Activated CD4-positive, alpha-beta memory T cell treated with anti-CD3 and anti-CD28 coated beads for 36 hours (primary cell): ENCODE measurements at regions of chr2 and their contacts with region 1.

Region 1: GRCh38 chr2:26764078-26764887 is at the start of gene SLC35F6:
- DNase-seq: peak; percentile 87
- H3K4me3 Mint-ChIP-seq: peak within 1 kb of the TSS; percentile 79
- H3K27ac Mint-ChIP-seq: peak within 1 kb of the TSS; percentile 82
- H3K4me1 Mint-ChIP-seq: peaks cover 34% of the 10 kb centered on the region
- H3K27me3 Mint-ChIP-seq: no peaks in the 10 kb centered on the region
- total RNA-seq, gene SLC35F6: 6.6 to 6.8 TPM

Region 2: DNA sequence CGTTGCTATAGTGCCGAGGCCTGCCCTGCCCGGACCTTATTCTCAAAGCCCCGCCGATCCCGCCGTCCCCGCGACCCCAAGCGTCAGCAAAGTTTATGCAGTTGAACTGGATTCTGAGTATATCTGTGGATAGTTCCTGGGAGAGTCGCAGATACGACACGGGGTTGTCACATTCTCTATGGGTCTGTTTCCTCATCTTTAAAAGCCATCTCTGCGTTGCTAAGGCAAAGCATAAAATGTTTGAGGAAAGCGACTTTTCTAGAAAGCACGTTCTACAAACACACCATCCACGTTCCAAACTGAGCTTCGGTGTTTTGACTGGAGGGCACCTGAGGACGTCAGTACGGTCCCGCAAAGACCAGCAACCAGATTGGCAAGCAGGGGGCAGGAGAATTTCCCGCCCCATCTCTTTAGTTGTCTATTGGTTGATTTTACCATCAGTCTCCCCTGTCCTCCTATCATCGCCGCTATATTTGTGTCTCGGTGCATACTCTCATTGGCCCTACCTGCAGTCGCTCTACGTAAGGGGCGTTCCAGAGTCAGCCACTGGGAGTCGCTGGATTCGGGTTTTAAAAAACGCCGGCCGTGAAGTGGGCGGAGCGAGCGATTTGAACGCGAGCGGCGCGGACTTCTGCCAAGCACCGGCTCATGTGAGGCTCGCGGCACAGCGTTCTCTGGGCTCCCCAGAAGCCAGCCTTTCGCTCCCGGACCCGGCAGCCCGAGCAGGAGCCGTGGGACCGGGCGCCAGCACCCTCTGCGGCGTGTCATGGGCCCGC is 21.3 kb after region 1 on chr2 and contains the start of gene CENPA:
- CTCF ChIA-PET with region 1: no interaction called
- POLR2A ChIA-PET with region 1: interaction called, 3 read pairs
- intact Hi-C with region 1: loop called (anchors 2 kb)
- DNase-seq: peak; percentile 97
- H3K4me3 Mint-ChIP-seq: peak within 1 kb of the TSS; percentile 85
- H3K27ac Mint-ChIP-seq: peak within 1 kb of the TSS; percentile 52
- H3K4me1 Mint-ChIP-seq: peaks cover 17% of the 10 kb centered on the region
- H3K27me3 Mint-ChIP-seq: peaks cover 2% of the 10 kb centered on the region
- total RNA-seq, gene CENPA: 36.7 to 37.8 TPM

Region 3: GRCh38 chr2:26838121-26838906 is 74.0 kb after region 1 on chr2:
- CTCF ChIA-PET with region 1: no interaction called
- POLR2A ChIA-PET with region 1: no interaction called
- intact Hi-C with region 1: no loop called
- DNase-seq: no peak
- H3K4me3 Mint-ChIP-seq: no peak overlapping the region
- H3K27ac Mint-ChIP-seq: no peak overlapping the region
- H3K4me1 Mint-ChIP-seq: no peaks in the 10 kb centered on the region
- H3K27me3 Mint-ChIP-seq: peaks cover 24% of the 10 kb centered on the region